Breast epithelium (tissue), 4 donors: ENCODE measurements at regions of chr19 and their contacts with region 1.

Region 1: GRCh38 chr19:2691951-2692350 is 10.5 kb downstream of the GNG7 start:
- DNase-seq: peak in 1 of 2 donors; percentile 53
- H3K4me3 ChIP-seq: no peak overlapping the region
- H3K27ac ChIP-seq: peak overlapping the region in 1 of 2 donors; percentile 52
- H3K4me1 ChIP-seq: no peaks in the 10 kb centered on the region
- H3K27me3 ChIP-seq: no peaks in the 10 kb centered on the region
- CTCF ChIP-seq: no peak
- POLR2A ChIP-seq: no peak

Region 2: GRCh38 chr19:2719910-2720776 is 28.2 kb after region 1 on chr19:
- intact Hi-C with region 1: loop called (anchors 2 kb)
- DNase-seq: no peak
- H3K4me3 ChIP-seq: peak overlapping the region; percentile 33 to 70 (median 67)
- H3K27ac ChIP-seq: no peak overlapping the region
- H3K4me1 ChIP-seq: no peaks in the 10 kb centered on the region
- H3K27me3 ChIP-seq: peaks cover 0 to 4% of the 10 kb centered on the region in 2 donors
- CTCF ChIP-seq: no peak
- POLR2A ChIP-seq: no peak

Region 3: GRCh38 chr19:3995627-3996026 is 1303.7 kb after region 1 on chr19:
- intact Hi-C with region 1: no loop called
- DNase-seq: no peak
- H3K4me3 ChIP-seq: no peak overlapping the region
- H3K27ac ChIP-seq: no peak overlapping the region
- H3K4me1 ChIP-seq: no peaks in the 10 kb centered on the region
- H3K27me3 ChIP-seq: no peaks in the 10 kb centered on the region
- CTCF ChIP-seq: no peak
- POLR2A ChIP-seq: no peak